WTC11 (cell line): ENCODE measurements at regions of chr1 and their contacts with region 1.

Region 1: GRCh38 chr1:33086384-33086850 is 5.5 kb downstream of the AZIN2 start:
- DNase-seq: peak; percentile 84
- ATAC-seq: peak; percentile 91
- H3K4me3 Mint-ChIP-seq: no peak overlapping the region
- H3K27ac Mint-ChIP-seq: no peak overlapping the region
- H3K4me1 Mint-ChIP-seq: peaks cover 11% of the 10 kb centered on the region
- H3K27me3 Mint-ChIP-seq: peaks cover 51% of the 10 kb centered on the region
- CTCF ChIP-seq: peak; percentile 76

Region 2: DNA sequence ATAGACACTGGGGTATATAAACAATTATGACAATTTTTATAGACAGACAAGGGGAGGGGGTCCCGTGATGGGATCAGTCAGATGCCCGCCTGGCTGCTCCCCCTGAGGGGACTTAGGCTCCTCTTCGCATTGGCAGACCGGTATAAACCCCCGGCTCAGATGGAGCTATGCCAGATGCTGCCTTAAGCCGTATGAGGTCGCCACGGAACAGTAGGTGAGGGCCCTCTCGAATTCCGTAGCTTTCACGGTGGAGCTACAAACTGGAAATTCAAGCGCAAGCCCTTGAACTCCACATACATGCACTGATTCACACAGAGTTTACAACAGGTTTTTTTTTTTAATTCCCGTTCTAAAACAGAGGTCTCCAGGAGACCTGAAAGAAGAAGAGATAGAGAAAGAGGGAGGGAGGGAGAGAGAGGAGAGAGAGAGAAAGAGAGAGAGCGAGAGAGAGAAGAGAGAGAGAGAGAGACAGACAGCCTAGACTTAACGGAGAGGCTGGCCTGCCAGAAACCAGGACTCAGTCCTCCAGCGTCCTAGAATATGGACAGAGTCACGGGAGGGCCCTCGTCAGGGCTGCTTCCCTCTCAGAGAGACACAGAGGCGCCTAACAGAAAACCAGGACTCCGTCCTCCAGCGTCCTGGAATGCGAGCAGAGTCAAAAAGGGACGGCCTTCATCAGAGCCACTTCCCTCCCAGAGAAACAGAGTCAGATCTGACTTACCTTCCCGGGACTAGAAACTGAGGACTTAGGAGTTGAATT is 160.8 kb before region 1 on chr1:
- CTCF ChIA-PET with region 1: interaction called, 29 read pairs
- POLR2A ChIA-PET with region 1: interaction called, 4 read pairs
- DNase-seq: peak; percentile 53
- ATAC-seq: peak; percentile 87
- H3K4me3 Mint-ChIP-seq: peak overlapping the region; percentile 85
- H3K27ac Mint-ChIP-seq: no peak overlapping the region
- H3K4me1 Mint-ChIP-seq: peaks cover 21% of the 10 kb centered on the region
- H3K27me3 Mint-ChIP-seq: peaks cover 84% of the 10 kb centered on the region
- CTCF ChIP-seq: no peak

Region 3: DNA sequence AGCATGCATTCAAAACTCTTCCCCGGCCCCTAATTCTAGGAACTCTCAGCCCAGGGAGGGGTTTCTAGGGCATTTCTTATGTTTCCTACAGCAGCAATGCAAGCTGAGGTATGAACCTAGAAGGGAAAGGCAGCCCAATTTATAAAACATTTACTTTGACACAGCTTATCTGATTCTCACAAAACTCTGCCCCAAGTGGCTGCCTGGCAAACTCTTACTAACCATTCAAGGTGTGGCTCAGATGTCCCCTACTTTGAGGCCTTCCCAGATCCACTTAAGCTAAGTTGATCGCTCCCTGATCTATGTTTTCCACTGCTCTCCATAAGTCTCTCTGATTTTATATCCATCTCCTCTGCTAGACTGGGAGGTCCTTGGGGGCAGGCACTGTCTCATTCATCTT is 85.1 kb before region 1 on chr1:
- CTCF ChIA-PET with region 1: interaction called, 14 read pairs
- POLR2A ChIA-PET with region 1: no interaction called
- DNase-seq: no peak
- ATAC-seq: peak; percentile 38
- H3K4me3 Mint-ChIP-seq: no peak overlapping the region
- H3K27ac Mint-ChIP-seq: peak overlapping the region; percentile 54; the same call in 1 of the 2 replicates
- H3K4me1 Mint-ChIP-seq: peaks cover 14% of the 10 kb centered on the region
- H3K27me3 Mint-ChIP-seq: no peaks in the 10 kb centered on the region
- CTCF ChIP-seq: no peak